ENCODE measurements at regions of chr19 and their contacts with region 1.

Region 1: GRCh38 chr19:47256688-47257443 is 541 bp downstream of the CCDC9 start:
- DNase-seq: peak; percentile 96 to 100 (median 98)

Region 2: DNA sequence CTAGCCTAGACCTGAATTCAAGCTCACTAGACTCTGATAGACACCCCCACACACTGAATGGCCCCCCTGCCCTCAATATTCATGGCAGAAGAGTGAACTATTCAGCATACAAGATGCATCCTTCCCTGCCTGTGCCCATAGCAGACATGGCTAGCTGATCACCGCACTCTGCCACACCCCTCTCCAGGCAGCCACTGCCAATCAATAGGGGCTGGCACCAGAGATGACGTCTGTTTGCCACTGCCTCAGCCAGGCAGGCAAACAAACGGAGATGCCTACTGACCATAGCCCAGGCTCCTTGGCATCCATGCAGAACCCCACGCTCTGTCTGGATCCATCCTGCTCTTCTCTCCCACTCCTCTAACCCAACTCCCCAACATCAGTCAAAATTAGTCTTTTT is 251.0 kb before region 1 on chr19:
- intact Hi-C with region 1: no loop called
- DNase-seq: no peak

Region 3: DNA sequence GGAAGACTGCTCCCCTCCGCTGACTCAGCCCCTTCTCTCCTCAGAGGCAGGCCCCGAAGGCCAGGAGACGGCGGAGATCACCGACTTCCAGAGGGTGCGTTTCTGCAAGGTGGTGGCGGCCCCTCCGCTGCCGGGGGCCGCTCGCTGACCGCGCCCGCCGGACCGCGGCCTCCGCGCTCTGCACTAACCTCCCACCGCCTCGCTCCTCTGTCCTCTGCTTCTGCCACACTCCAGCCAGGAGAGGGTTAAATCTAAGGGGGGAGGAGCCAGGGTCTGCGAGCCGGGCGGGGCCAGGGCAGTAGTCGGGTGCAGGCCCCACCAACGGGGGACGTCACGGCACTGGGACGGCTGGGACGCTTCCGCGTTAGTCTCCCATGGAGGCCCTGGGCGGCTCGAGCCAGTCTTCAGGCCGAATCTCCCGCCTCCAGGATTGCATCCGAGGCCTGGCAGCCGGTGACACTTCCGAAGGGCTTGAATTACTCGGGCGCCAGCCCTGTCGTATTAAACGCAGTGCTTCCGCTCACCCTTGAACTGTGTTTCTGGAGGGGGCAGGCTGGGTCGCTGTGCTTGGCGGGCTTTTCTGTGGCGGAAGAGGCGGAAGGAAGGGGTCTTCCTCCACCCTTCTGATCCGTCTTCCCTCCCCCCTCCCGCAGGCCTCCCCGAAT is 16.6 kb after region 1 on chr19:
- intact Hi-C with region 1: loop called (anchors 2 kb)
- DNase-seq: peak; percentile 79 to 99 (median 91)

Region 4: DNA sequence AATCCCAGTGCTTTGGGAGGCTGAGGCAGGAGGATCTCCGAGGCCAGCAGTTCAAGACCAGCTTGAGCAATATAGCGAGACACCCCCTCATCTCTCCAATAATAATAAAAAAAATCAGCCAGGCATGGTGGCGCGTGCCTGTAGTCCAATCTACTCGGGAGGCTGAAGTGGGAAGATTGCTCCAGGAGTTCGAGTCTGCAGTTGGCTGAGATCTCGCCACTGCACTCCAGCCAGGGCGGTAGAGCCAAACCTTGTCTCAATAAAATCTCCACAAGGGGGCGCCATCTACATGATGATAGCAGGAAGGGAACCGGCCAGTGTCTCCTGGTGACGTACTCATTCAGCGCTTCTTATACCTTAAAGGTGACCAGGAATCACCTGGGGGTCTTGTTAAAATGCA is 39.2 kb after region 1 on chr19:
- intact Hi-C with region 1: no loop called
- DNase-seq: peak in 7 of 10 donors; percentile 56 to 91 (median 70)